SK-N-SH (cell line): ENCODE measurements at regions of chr1 and their contacts with region 1.

Region 1: GRCh38 chr1:24201941-24202440 is 14.9 kb upstream of the IFNLR1 start:
- DNase-seq: peak; percentile 77
- H3K4me3 ChIP-seq: no peak overlapping the region; a peak in 1 of 4 replicates
- H3K27ac ChIP-seq: no peak overlapping the region; a peak in 1 of 4 replicates
- H3K4me1 ChIP-seq: peaks cover 0 to 7% of the 10 kb centered on the region in 2 experiments; a peak in 1 of 4 replicates
- H3K27me3 ChIP-seq: no peaks in the 10 kb centered on the region
- CTCF ChIP-seq: peak; percentile 85
- EP300 ChIP-seq: no peak
- RAD21 ChIP-seq: peak; percentile 88

Region 2: GRCh38 chr1:24070821-24071393 is 131.1 kb before region 1 on chr1:
- CTCF ChIA-PET with region 1: interaction called, 31 read pairs
- POLR2A ChIA-PET with region 1: no interaction called
- DNase-seq: peak; percentile 90
- H3K4me3 ChIP-seq: no peak overlapping the region; a peak in 1 of 4 replicates
- H3K27ac ChIP-seq: no peak overlapping the region
- H3K4me1 ChIP-seq: peaks cover 0 to 3% of the 10 kb centered on the region in 2 experiments; a peak in 1 of 4 replicates
- H3K27me3 ChIP-seq: no peaks in the 10 kb centered on the region
- CTCF ChIP-seq: peak; percentile 87
- EP300 ChIP-seq: no peak
- RAD21 ChIP-seq: peak; percentile 91

Region 3: GRCh38 chr1:24186993-24187805 is 14.8 kb before region 1 on chr1 and contains the start of gene IFNLR1:
- CTCF ChIA-PET with region 1: interaction called, 34 read pairs
- POLR2A ChIA-PET with region 1: no interaction called
- DNase-seq: peak; percentile 89
- H3K4me3 ChIP-seq: peak within 1 kb of the TSS; percentile 49 to 58
- H3K27ac ChIP-seq: no peak within 1 kb of the TSS
- H3K4me1 ChIP-seq: peaks cover 0 to 5% of the 10 kb centered on the region in 2 experiments; a peak in 1 of 4 replicates
- H3K27me3 ChIP-seq: peaks cover 4% of the 10 kb centered on the region; the same call in 1 of the 2 replicates
- CTCF ChIP-seq: no peak
- EP300 ChIP-seq: no peak
- RAD21 ChIP-seq: no peak
- polyA plus RNA-seq, gene IFNLR1: 0.29 and 0.30 TPM in 2 replicates

Region 4: GRCh38 chr1:24321697-24322469 is 119.9 kb after region 1 on chr1:
- CTCF ChIA-PET with region 1: interaction called, 11 read pairs
- POLR2A ChIA-PET with region 1: no interaction called
- DNase-seq: no peak
- H3K4me3 ChIP-seq: no peak overlapping the region
- H3K27ac ChIP-seq: no peak overlapping the region
- H3K4me1 ChIP-seq: peaks cover 0 to 9% of the 10 kb centered on the region in 2 experiments; a peak in 1 of 4 replicates
- H3K27me3 ChIP-seq: 0 out of 2 replicates have a peak, but pooled peaks cover 17% of the 10 kb centered on the region
- CTCF ChIP-seq: no peak
- EP300 ChIP-seq: no peak
- RAD21 ChIP-seq: no peak

Region 5: DNA sequence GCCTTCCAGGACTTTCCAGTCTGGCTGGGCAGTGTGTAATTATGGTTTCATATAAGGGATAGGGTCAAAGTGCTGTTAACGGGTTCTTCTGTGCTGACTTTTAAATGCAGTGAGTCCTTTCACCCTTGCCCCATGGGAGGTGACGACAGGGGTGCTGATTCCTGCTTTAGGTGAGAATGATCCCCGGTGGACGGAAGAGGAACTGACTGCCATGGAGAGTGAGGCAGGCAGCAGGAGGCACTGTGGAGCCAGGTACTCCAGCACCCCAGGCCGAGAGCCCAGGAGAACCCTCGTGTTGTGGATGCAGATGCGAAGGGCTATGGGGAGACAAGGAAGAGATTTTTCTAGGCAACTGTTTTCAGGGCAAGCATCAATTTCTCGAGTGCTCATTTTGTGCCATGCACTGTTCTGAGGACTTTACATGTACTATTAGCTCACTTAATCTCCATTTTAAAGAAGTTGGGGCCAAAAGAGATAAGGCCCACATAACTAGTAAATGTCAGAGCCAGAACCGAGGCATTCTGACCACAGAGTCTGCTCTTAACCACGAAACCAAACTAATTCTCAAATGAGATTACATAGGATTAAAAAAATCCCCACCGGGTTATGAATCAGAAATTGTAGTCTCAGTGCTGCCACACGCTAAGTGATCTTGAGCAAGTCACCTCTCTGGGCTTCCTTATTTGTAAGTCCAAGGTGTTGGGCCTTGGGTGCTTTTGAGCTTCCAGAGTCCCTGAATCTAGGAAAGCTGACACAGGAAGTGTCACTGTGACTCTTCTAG is 183.4 kb after region 1 on chr1:
- CTCF ChIA-PET with region 1: interaction called, 451 read pairs
- POLR2A ChIA-PET with region 1: no interaction called
- DNase-seq: no peak
- H3K4me3 ChIP-seq: no peak overlapping the region
- H3K27ac ChIP-seq: no peak overlapping the region
- H3K4me1 ChIP-seq: peaks cover 3 to 7% of the 10 kb centered on the region in 2 experiments; a peak in 2 of 4 replicates
- H3K27me3 ChIP-seq: no peaks in the 10 kb centered on the region
- CTCF ChIP-seq: peak; percentile 59
- EP300 ChIP-seq: no peak
- RAD21 ChIP-seq: 0 out of 2 replicates have a peak, but pooled peaks have one; percentile 10

Region 6: DNA sequence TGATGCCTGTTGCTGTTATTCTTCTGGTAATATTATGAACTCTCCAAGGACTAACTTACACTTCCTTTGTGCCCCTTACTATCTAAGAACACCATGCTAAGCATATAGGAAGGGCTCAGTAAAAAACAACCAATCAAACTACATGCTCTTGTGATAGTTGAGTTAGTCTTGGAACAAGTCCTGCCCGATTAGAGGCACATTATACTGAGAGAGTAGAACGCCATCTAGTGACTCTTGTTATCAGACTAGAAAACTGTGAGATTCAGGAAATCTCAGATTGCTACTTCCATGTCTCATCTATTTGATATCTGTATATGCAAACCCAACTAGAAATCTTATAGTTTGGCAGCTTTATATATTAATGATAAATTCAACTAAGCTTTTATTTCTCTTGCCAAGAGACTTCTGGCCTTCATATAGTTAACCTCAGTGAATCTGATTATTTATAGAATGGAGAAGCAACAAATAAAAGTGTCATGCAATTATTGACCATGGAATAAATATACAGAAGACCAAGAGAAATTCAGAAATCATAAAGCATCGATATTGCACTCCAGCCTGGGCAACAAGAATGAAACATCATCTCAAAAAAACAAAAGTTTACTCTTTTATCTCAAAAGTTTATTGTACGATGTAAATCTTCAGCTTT is 433.3 kb after region 1 on chr1:
- CTCF ChIA-PET with region 1: interaction called, 26 read pairs
- POLR2A ChIA-PET with region 1: no interaction called
- DNase-seq: peak; percentile 66
- H3K4me3 ChIP-seq: no peak overlapping the region
- H3K27ac ChIP-seq: no peak overlapping the region
- H3K4me1 ChIP-seq: no peaks in the 10 kb centered on the region
- H3K27me3 ChIP-seq: no peaks in the 10 kb centered on the region
- CTCF ChIP-seq: peak; percentile 76
- EP300 ChIP-seq: no peak
- RAD21 ChIP-seq: peak; percentile 86